ENCODE measurements at regions of chr22 and their contacts with region 1.

Region 1: GRCh38 chr22:24156913-24157821 is 24.1 kb upstream of the SUSD2 start:
- DNase-seq: peak; percentile 92
- ATAC-seq: peak; percentile 68
- H3K4me3 Mint-ChIP-seq: peak overlapping the region; percentile 97
- H3K27ac Mint-ChIP-seq: peak overlapping the region; percentile 94
- H3K4me1 Mint-ChIP-seq: peaks cover 53% of the 10 kb centered on the region
- H3K27me3 Mint-ChIP-seq: no peaks in the 10 kb centered on the region

Region 2: GRCh38 chr22:23857606-23858483 is 299.3 kb before region 1 on chr22 and contains the start of gene SLC2A11:
- POLR2A ChIA-PET with region 1: interaction called, 11 read pairs
- DNase-seq: peak; percentile 93
- ATAC-seq: peak; percentile 98
- H3K4me3 Mint-ChIP-seq: peak within 1 kb of the TSS; percentile 81
- H3K27ac Mint-ChIP-seq: peak within 1 kb of the TSS; percentile 90
- H3K4me1 Mint-ChIP-seq: peaks cover 14% of the 10 kb centered on the region
- H3K27me3 Mint-ChIP-seq: peaks cover 7% of the 10 kb centered on the region
- total RNA-seq, gene SLC2A11: 10.0 to 12.1 TPM

Region 3: DNA sequence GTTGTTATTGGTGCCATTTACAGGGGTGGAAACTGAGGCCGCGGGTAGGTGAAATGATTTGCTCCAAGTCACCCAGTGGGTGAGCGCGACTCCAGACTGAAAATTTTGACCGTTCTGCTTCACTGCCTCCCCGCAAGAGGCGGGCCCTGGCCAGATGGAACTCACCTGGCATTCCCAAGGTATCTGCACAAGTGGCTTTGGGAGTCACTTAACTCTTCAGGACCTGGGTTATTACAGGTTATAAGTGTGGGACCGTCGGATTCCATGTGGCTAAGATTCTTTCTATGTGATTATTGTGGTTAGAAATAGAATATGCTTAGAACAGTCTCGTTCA is 145.5 kb before region 1 on chr22:
- POLR2A ChIA-PET with region 1: interaction called, 36 read pairs
- DNase-seq: no peak
- ATAC-seq: no peak
- H3K4me3 Mint-ChIP-seq: peak overlapping the region; percentile 98
- H3K27ac Mint-ChIP-seq: peak overlapping the region; percentile 94
- H3K4me1 Mint-ChIP-seq: peaks cover 31% of the 10 kb centered on the region
- H3K27me3 Mint-ChIP-seq: no peaks in the 10 kb centered on the region

Region 4: GRCh38 chr22:24117942-24118341 is 39.2 kb before region 1 on chr22:
- POLR2A ChIA-PET with region 1: no interaction called
- DNase-seq: no peak
- ATAC-seq: no peak
- H3K4me3 Mint-ChIP-seq: no peak overlapping the region
- H3K27ac Mint-ChIP-seq: peak overlapping the region; percentile 28
- H3K4me1 Mint-ChIP-seq: peaks cover 3% of the 10 kb centered on the region
- H3K27me3 Mint-ChIP-seq: no peaks in the 10 kb centered on the region

Region 5: GRCh38 chr22:24133187-24133965 is 23.8 kb before region 1 on chr22:
- POLR2A ChIA-PET with region 1: interaction called, 110 read pairs
- DNase-seq: peak; percentile 49
- ATAC-seq: peak; percentile 44
- H3K4me3 Mint-ChIP-seq: no peak overlapping the region
- H3K27ac Mint-ChIP-seq: peak overlapping the region; percentile 70
- H3K4me1 Mint-ChIP-seq: peaks cover 24% of the 10 kb centered on the region
- H3K27me3 Mint-ChIP-seq: no peaks in the 10 kb centered on the region

Region 6: GRCh38 chr22:24146194-24146616 is 11.0 kb before region 1 on chr22:
- POLR2A ChIA-PET with region 1: interaction called, 110 read pairs
- DNase-seq: no peak
- ATAC-seq: peak; percentile 84
- H3K4me3 Mint-ChIP-seq: peak overlapping the region; percentile 64
- H3K27ac Mint-ChIP-seq: peak overlapping the region; percentile 79
- H3K4me1 Mint-ChIP-seq: peaks cover 52% of the 10 kb centered on the region
- H3K27me3 Mint-ChIP-seq: no peaks in the 10 kb centered on the region

Region 7: DNA sequence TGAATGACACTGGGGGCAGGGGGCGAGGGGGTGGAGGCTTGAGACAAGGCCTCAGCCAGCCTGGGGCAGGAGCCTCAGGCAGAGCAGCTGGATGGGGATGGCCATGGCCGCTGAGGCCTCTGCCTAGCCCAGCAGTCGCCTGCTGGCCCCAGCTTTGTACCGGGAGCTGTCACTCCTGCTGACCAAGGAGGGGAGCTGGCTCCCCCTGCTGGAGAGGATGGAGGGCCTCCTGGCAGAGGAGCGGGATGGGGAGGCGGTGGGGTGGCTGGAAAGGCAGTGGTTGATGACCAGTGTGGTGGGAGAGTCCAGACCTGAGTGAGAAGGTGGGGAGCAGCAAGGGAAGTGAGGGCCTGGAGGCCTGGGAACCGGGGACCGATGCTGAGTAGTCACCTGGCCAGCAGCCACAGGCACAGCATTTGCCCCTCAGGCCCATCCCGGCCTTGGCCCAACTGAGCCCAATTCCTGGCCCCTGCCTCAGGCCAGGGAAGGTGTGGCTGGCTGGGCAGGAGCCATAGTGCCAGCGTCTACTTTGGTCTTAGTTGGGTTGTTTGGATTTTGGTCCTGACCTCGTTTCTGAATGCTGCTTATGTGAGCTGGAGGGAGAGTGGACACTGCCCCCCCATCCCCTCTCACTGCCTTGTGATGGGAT is 18.1 kb after region 1 on chr22:
- POLR2A ChIA-PET with region 1: interaction called, 23 read pairs
- DNase-seq: peak; percentile 73
- ATAC-seq: peak; percentile 55
- H3K4me3 Mint-ChIP-seq: no peak overlapping the region
- H3K27ac Mint-ChIP-seq: peak overlapping the region; percentile 56
- H3K4me1 Mint-ChIP-seq: no peaks in the 10 kb centered on the region
- H3K27me3 Mint-ChIP-seq: no peaks in the 10 kb centered on the region